ENCODE measurements at regions of chr9 and their contacts with region 1.

Region 1: GRCh38 chr9:21688108-21689102 is 114.0 kb upstream of the MTAP start:
- DNase-seq: peak; percentile 83
- H3K4me3 ChIP-seq: no peak overlapping the region
- H3K27ac ChIP-seq: peak overlapping the region; percentile 70
- H3K4me1 ChIP-seq: peaks cover 61% of the 10 kb centered on the region
- H3K27me3 ChIP-seq: no peaks in the 10 kb centered on the region
- CTCF ChIP-seq: no peak
- POLR2A ChIP-seq: no peak

Region 2: GRCh38 chr9:21465859-21466518 is 222.4 kb before region 1 on chr9:
- CTCF ChIA-PET with region 1: interaction called, 11 read pairs
- POLR2A ChIA-PET with region 1: no interaction called
- dilution Hi-C with region 1: no loop called
- intact Hi-C with region 1: no loop called
- DNase-seq: peak; percentile 88
- H3K4me3 ChIP-seq: no peak overlapping the region
- H3K27ac ChIP-seq: no peak overlapping the region
- H3K4me1 ChIP-seq: no peaks in the 10 kb centered on the region
- H3K27me3 ChIP-seq: no peaks in the 10 kb centered on the region
- CTCF ChIP-seq: peak; percentile 62 to 63
- POLR2A ChIP-seq: no peak

Region 3: DNA sequence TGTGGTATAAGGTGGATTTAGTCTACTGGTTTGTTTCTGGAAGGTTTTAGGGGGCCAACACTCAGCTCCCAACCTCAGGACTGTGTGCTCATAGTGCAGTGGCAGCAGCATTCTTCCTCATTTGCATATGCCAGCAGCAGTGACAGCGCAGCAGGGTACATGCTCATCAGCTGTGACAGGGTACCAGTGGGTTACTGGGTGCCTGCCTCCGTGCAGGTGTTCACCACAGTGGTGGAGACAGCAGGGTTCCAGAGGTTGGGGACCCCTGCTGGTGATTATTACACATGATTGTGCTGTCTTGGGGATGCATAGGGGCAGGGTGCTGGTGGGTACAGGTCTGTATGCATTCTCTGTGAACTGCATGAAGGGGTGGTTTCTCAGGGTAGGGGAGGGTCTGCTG is 160.8 kb before region 1 on chr9:
- CTCF ChIA-PET with region 1: no interaction called
- POLR2A ChIA-PET with region 1: no interaction called
- dilution Hi-C with region 1: no loop called
- intact Hi-C with region 1: no loop called
- DNase-seq: no peak
- H3K4me3 ChIP-seq: no peak overlapping the region
- H3K27ac ChIP-seq: no peak overlapping the region
- H3K4me1 ChIP-seq: no peaks in the 10 kb centered on the region
- H3K27me3 ChIP-seq: no peaks in the 10 kb centered on the region
- CTCF ChIP-seq: no peak
- POLR2A ChIP-seq: no peak

Region 4: GRCh38 chr9:21549251-21549765 is 139.1 kb before region 1 on chr9:
- CTCF ChIA-PET with region 1: interaction called, 4 read pairs
- POLR2A ChIA-PET with region 1: no interaction called
- dilution Hi-C with region 1: loop called (anchors 10 kb)
- intact Hi-C with region 1: loop called (anchors 1 kb)
- DNase-seq: peak; percentile 100
- H3K4me3 ChIP-seq: no peak overlapping the region
- H3K27ac ChIP-seq: peak overlapping the region; percentile 92
- H3K4me1 ChIP-seq: peaks cover 61% of the 10 kb centered on the region
- H3K27me3 ChIP-seq: no peaks in the 10 kb centered on the region
- CTCF ChIP-seq: no peak
- POLR2A ChIP-seq: peak; percentile 57

Region 5: DNA sequence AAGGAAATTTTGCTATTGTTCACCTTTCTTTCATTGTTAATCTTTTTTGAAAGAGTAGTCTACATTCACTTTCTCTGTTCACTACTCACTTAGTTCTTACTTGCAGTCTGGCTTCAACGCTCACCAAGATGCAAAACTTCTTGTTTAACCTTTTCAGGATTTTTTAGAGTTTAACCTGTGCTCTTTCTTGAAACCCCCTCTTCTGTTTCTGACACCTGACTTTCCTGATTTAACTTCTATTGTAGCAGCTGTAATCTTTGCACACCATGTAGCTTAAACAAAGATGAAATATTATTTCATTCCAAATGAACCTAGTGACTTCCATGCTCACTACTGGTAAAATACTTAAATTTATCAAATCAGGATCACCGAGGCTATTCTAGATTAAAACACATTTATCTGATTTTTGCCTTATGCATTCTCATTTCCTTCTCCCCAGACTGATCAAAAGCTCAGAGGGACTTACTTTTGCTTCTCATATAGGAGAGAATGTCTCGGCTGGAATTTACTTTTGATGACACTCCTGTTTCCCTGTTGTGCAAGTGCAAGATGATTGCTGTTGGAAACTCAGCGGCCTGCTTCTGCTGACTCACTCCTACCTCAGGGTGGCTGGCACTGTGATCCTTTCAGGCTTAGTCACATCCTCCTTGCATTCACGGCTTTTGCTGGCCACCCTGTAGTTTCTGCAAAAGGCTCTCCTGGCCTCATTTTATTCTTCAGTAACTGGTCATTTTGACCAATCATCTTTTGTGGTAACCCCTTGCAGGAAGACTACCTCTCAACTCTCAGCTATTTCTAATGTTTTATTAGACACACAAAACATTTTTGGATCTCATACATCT is 97.0 kb before region 1 on chr9:
- CTCF ChIA-PET with region 1: no interaction called
- POLR2A ChIA-PET with region 1: no interaction called
- dilution Hi-C with region 1: no loop called
- intact Hi-C with region 1: loop called (anchors 1 kb)
- DNase-seq: peak; percentile 94
- H3K4me3 ChIP-seq: peak overlapping the region in 2 of 3 experiments; percentile 36 to 47
- H3K27ac ChIP-seq: peak overlapping the region; percentile 72
- H3K4me1 ChIP-seq: peaks cover 20% of the 10 kb centered on the region
- H3K27me3 ChIP-seq: no peaks in the 10 kb centered on the region
- CTCF ChIP-seq: no peak
- POLR2A ChIP-seq: no peak

Region 6: DNA sequence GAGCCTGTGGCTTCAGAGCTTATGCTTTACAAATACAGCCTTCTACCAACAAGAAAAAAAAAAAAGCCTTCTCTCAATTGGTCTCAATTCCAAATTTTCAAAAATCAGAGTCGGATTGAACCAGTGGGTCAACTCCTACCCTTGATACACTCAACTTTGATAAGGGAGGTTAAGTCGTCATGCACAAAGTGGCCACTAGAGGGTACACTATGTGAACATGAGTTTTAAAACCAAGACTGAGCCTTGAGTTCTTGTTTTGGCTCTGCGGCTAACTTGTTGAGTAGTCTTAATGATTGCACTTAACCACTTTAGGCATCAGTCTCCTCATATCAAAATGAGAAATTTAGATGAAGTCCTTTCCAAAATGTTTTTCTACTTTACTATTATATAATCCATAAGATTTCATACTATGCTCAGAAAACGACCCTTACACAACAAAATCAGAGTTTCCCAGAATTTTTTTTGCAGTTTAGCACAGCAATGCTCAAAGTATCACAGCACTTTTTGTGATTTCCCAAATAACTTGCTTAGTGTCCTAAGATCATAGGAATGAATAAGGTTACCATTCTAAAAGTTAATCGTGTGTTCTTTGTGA is 21.2 kb after region 1 on chr9:
- CTCF ChIA-PET with region 1: interaction called, 42 read pairs
- POLR2A ChIA-PET with region 1: no interaction called
- dilution Hi-C with region 1: no loop called
- intact Hi-C with region 1: no loop called
- DNase-seq: peak; percentile 69
- H3K4me3 ChIP-seq: no peak overlapping the region
- H3K27ac ChIP-seq: no peak overlapping the region
- H3K4me1 ChIP-seq: no peaks in the 10 kb centered on the region
- H3K27me3 ChIP-seq: no peaks in the 10 kb centered on the region
- CTCF ChIP-seq: peak; percentile 67 to 74
- POLR2A ChIP-seq: no peak

Region 7: GRCh38 chr9:22105005-22105722 is 416.8 kb after region 1 on chr9:
- CTCF ChIA-PET with region 1: no interaction called
- POLR2A ChIA-PET with region 1: no interaction called
- dilution Hi-C with region 1: no loop called
- intact Hi-C with region 1: loop called (anchors 10 kb)
- DNase-seq: no peak
- H3K4me3 ChIP-seq: no peak overlapping the region
- H3K27ac ChIP-seq: no peak overlapping the region
- H3K4me1 ChIP-seq: peaks cover 20% of the 10 kb centered on the region
- H3K27me3 ChIP-seq: no peaks in the 10 kb centered on the region
- CTCF ChIP-seq: no peak
- POLR2A ChIP-seq: no peak

Measured in endothelial cell of umbilical vein (primary cell).